Panc1 (cell line): ENCODE measurements at regions of chr14 and their contacts with region 1.

Region 1: DNA sequence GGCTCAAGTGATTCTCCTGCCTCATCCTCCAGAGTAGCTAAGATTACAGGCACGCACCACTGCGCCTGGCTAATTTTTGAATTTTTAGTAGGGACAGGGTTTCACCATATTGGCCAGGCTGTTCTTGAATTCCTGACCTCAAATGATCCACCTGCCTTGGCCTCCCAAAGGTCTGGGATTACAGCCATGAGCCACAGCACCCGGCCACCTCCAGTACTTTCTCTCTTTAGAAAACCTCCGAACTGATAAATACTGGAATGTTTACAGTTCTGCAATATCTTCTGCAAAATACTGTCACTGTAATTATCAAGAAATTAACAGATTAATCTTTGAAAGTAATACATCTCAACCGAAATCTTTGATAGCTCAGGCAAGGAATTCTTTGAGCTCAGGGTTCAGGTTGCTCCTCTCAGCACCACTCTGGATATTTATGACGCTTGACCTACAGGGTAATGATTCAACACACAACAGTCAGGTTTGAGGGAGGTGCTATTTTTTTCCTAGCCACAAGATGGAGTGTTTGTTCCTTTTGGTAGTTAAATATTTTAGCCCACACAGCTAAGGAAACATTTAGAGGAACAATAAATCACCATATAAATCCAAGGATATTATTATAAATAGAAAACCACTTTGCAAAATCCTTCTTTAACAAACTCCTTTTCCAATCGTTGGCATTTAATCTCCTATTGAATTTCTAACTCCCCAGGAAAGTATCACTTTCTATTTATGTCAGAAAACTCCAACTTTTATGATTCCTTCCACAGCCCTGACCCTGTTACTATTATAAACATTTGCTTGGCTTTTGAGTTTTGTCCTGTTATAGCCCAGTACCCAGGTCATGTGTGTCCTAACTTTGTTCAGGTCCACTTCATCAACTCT is 48.6 kb upstream of the GTF2A1 start:
- DNase-seq: peak; percentile 35
- ATAC-seq: peak; percentile 69; the same call in 1 of the 2 replicates
- H3K4me3 ChIP-seq: no peak overlapping the region
- H3K27ac ChIP-seq: no peak overlapping the region
- H3K4me1 ChIP-seq: no peaks in the 10 kb centered on the region
- H3K27me3 ChIP-seq: peaks cover 4% of the 10 kb centered on the region
- CTCF ChIP-seq: peak; percentile 70

Region 2: DNA sequence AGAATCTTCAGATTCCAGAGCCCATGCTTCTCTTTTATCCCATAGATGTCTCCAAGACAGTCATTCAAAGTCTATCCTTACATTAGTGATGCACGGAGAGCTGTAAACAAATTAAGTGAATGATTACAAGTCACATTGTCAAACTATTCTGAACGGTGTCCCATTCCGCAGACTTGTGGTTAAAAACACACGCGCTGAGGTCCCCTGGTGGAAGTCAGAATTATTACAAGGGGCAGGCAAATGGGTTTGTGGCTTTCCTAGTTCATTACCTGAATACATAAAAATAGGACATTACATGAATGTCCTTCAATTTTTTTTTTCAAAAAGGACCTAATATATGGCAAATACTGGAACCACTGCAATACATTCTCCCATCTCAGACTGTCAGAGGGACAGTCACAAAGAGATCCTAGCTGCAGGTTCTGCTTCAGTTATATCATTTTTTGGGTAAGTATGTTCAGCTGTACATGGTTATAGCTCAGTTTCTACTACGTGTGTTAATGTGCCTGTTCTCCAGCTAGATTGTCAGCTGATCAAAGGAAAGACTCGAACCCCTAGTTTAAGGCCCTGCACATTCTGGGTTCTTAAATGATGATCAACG is 183.9 kb after region 1 on chr14:
- CTCF ChIA-PET with region 1: interaction called, 7 read pairs
- POLR2A ChIA-PET with region 1: no interaction called
- in situ Hi-C with region 1: no loop called
- intact Hi-C with region 1: loop called (anchors 2 kb)
- DNase-seq: peak; percentile 38
- ATAC-seq: peak; percentile 84
- H3K4me3 ChIP-seq: no peak overlapping the region
- H3K27ac ChIP-seq: no peak overlapping the region
- H3K4me1 ChIP-seq: no peaks in the 10 kb centered on the region; the same call in 1 of the 2 replicates
- H3K27me3 ChIP-seq: no peaks in the 10 kb centered on the region
- CTCF ChIP-seq: peak; percentile 79